Aorta (tissue), 5 donors: ENCODE measurements at regions of chr2 and their contacts with region 1.

Region 1: DNA sequence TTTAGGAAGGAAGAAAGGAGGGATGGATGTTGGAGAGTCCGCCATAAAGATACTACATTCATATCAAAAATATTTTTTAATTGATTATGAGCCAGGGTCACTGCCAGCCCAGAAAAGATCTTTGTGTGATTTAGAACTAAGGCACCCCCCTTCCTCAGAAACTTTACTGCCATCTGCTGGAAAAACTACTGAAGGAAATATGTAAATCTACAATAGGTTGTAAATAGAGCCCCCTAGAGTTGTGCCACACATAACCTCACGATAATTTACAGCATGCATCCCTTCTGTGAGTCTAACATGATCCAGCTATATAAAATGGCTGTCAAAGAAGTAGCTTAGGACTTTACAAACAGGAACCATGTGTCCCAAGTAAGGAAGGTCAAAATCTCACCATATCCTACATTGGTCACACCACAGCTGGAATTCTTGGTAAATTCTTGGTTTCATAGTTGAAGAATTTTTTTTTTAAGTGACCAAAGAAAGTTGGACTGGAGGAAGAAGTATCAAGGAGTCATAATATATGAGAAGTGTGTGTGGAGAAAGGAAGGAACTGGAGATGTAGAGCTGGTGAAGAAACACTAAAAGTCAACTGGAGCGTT is 152.5 kb downstream of the CYP26B1 start:
- DNase-seq: no peak
- ATAC-seq: no peak
- H3K4me3 ChIP-seq: no peak overlapping the region
- H3K27ac ChIP-seq: no peak overlapping the region
- H3K4me1 ChIP-seq: no peaks in the 10 kb centered on the region
- H3K27me3 ChIP-seq: peaks cover 0 to 1% of the 10 kb centered on the region in 2 donors

Region 2: GRCh38 chr2:71536226-71536671 is 458.9 kb before region 1 on chr2:
- intact Hi-C with region 1: no loop called
- DNase-seq: peak in 1 of 2 donors; percentile 67
- ATAC-seq: no peak
- H3K4me3 ChIP-seq: no peak overlapping the region
- H3K27ac ChIP-seq: no peak overlapping the region
- H3K4me1 ChIP-seq: no peaks in the 10 kb centered on the region
- H3K27me3 ChIP-seq: no peaks in the 10 kb centered on the region

Region 3: GRCh38 chr2:71550801-71551630 is 444.1 kb before region 1 on chr2:
- intact Hi-C with region 1: loop called in 1 of 2 experiments (anchors 5 kb)
- DNase-seq: peak; percentile 38 to 51
- ATAC-seq: no peak
- H3K4me3 ChIP-seq: no peak overlapping the region
- H3K27ac ChIP-seq: no peak overlapping the region
- H3K4me1 ChIP-seq: no peaks in the 10 kb centered on the region
- H3K27me3 ChIP-seq: no peaks in the 10 kb centered on the region

Region 4: DNA sequence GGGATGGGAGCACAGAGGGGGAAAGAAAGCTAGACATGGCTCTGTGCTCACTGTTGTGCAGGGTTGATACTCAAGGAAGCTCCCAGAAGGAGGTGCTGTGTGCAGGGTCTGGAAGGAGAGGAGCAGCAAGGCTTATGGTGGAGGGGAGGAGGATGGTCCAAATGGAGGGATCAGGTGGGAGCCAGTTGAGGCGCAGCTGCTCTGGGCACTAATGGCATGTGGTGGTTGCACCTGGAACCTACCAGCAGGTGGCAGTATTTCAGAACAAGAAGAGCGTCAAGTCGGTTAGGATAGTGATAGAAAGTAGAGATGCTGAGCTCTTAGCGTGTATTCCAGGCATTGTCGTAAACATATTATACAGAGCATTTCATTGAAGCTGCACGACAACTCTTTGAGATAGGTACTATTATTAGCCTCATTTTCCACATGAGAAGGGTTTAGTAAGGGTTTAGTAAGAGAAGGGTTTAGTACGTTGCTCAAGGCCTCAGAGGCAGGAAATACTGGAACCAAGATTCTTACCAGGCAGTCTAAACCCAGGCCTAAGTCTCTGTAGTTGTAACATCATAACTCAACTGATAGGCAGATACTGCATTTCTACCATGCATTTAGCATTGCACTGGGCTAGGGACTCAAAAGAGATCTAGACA is 71.2 kb before region 1 on chr2:
- intact Hi-C with region 1: loop called in 1 of 2 experiments (anchors 5 kb)
- DNase-seq: peak in 1 of 2 donors; percentile 71
- ATAC-seq: peak; percentile 82
- H3K4me3 ChIP-seq: no peak overlapping the region
- H3K27ac ChIP-seq: no peak overlapping the region
- H3K4me1 ChIP-seq: no peaks in the 10 kb centered on the region
- H3K27me3 ChIP-seq: no peaks in the 10 kb centered on the region

Region 5: GRCh38 chr2:72041638-72042111 is 46.5 kb after region 1 on chr2:
- intact Hi-C with region 1: no loop called
- DNase-seq: no peak
- ATAC-seq: no peak
- H3K4me3 ChIP-seq: no peak overlapping the region
- H3K27ac ChIP-seq: no peak overlapping the region
- H3K4me1 ChIP-seq: no peaks in the 10 kb centered on the region
- H3K27me3 ChIP-seq: no peaks in the 10 kb centered on the region